Endothelial cell of umbilical vein (primary cell): ENCODE measurements at regions of chr11 and their contacts with region 1.

Region 1: GRCh38 chr11:43830928-43831440 is 49.6 kb upstream of the ALKBH3 start:
- DNase-seq: peak; percentile 93
- H3K4me3 ChIP-seq: no peak overlapping the region
- H3K27ac ChIP-seq: peak overlapping the region; percentile 51
- H3K4me1 ChIP-seq: peaks cover 15% of the 10 kb centered on the region
- H3K27me3 ChIP-seq: no peaks in the 10 kb centered on the region
- CTCF ChIP-seq: no peak
- POLR2A ChIP-seq: no peak

Region 2: GRCh38 chr11:44016131-44016530 is 185.1 kb after region 1 on chr11:
- CTCF ChIA-PET with region 1: no interaction called
- POLR2A ChIA-PET with region 1: no interaction called
- dilution Hi-C with region 1: no loop called
- intact Hi-C with region 1: loop called (anchors 2 kb)
- DNase-seq: no peak
- H3K4me3 ChIP-seq: no peak overlapping the region
- H3K27ac ChIP-seq: no peak overlapping the region
- H3K4me1 ChIP-seq: no peaks in the 10 kb centered on the region
- H3K27me3 ChIP-seq: peaks cover 8 to 19% of the 10 kb centered on the region in 2 experiments
- CTCF ChIP-seq: no peak
- POLR2A ChIP-seq: no peak